ENCODE measurements at regions of chr3 and their contacts with region 1.

Region 1: DNA sequence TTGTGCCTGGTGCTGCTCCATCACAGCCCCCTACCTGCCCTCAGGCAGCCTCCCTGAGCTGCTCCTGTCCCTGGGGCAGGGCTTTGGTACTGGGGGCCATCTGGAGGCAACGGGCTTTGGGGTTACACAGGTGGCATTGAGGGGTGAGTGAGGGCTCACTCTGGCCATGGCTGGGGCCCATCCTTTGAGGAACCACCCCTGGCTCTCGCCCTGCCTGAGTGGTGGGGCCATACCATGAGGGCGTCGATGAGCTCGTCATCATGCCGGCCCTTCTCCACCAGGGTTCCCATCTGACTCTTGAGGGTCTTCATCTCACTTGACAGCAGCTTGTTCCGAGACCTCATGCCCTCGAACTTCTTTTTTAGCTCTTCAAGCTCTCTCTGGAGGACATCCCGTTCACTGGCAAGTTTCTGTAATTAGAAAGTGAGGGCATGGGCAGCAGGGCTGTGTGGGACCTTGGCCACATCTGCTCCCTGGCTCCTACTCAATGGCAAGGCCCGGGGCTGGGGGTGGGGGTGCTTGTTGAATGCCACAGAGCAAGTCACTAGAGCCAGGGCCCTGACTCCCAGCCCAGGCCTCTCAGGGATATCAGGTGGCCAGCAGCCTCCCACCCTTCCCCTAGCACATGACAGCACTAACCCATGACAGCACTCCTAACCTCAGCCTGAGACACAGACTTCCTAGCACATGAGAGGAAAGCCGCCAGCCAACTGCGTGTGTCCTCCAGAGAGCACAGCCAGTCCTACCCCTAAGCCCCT is 33.5 kb downstream of the CCDC13 start:
- DNase-seq: peak; percentile 89 to 97 (median 90)
- ATAC-seq: peak; percentile 96 to 97 (median 96)
- H3K4me3 ChIP-seq: no peak overlapping the region
- H3K27ac ChIP-seq: peak overlapping the region; percentile 77 to 99 (median 92)
- H3K4me1 ChIP-seq: peaks cover 0 to 36% (median 15%) of the 10 kb centered on the region in 12 donors
- H3K27me3 ChIP-seq: no peaks in the 10 kb centered on the region
- CTCF ChIP-seq: no peak
- POLR2A ChIP-seq: no peak

Region 2: DNA sequence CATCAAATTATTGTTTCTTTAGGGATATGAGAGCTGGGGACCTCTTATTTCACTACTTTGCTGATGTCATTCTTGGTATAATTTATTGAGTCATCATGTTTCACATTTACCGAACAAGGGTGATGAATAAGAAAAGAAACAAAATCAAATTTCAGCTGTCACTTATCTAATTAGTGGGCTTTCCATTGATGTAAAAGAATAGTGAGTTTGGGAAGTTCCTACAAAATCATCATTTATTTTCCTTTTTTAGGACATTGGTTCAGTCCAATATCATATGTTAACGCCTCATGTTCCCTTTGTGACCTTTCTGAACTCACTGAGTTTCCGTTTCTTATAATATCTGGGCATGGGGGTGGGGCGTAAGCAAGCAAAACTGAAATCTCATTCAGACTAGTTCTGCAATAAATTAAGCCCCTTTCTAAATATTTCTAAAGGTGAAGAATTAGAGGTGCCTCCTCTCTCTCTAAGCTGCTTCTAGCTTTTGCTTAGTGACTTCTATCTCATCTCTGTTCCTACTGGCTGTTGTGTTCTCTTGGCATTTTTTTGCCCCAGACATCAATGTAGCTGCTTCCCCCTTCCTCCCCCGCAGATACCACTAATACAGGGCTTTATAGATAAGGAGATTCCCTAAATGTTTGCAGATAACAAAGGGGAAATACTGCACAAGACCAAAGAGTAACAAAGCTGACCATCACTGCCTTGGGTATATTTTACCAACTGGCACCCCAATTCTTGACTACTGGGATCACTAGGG is 1778.3 kb before region 1 on chr3:
- intact Hi-C with region 1: no loop called
- DNase-seq: no peak
- ATAC-seq: no peak
- H3K4me3 ChIP-seq: no peak overlapping the region
- H3K27ac ChIP-seq: no peak overlapping the region
- H3K4me1 ChIP-seq: no peaks in the 10 kb centered on the region
- H3K27me3 ChIP-seq: no peaks in the 10 kb centered on the region
- CTCF ChIP-seq: no peak
- POLR2A ChIP-seq: no peak

Region 3: DNA sequence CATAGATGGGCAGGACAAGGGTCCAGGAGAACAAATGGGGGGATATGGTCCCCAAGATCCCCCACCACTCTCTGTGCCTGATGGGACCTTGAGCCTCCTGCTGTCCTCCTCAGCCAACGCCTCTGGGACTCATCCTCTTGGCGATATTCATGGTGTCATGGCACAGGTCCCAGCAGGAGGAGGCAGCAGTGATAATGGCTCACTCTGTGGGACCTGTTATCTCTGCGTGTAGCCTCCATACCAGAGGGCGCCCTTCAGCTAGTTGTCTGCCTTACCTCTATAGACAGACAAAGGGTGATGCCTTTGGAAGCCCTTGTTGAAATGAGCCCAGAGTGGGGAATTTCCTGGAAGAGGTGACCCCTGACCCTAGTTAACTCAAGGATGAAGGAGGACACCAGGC is 78.7 kb before region 1 on chr3:
- intact Hi-C with region 1: loop called in 3 of 10 experiments (anchors 5 kb)
- DNase-seq: peak in 3 of 5 donors; percentile 43 to 64 (median 52)
- ATAC-seq: peak in 3 of 4 donors; percentile 32 to 58 (median 36)
- H3K4me3 ChIP-seq: no peak overlapping the region
- H3K27ac ChIP-seq: peak overlapping the region in 9 of 12 donors; percentile 19 to 98 (median 61)
- H3K4me1 ChIP-seq: peaks cover 0 to 63% (median 24%) of the 10 kb centered on the region in 12 donors
- H3K27me3 ChIP-seq: no peaks in the 10 kb centered on the region
- CTCF ChIP-seq: peak in 3 of 12 donors; percentile 18 to 43 (median 32)
- POLR2A ChIP-seq: no peak

Region 4: GRCh38 chr3:42667523-42668412 is 71.8 kb before region 1 on chr3:
- intact Hi-C with region 1: loop called in 2 of 10 experiments (anchors 5 kb)
- DNase-seq: peak in 1 of 5 donors; percentile 37
- ATAC-seq: peak in 3 of 4 donors; percentile 1 to 14 (median 5)
- H3K4me3 ChIP-seq: no peak overlapping the region
- H3K27ac ChIP-seq: peak overlapping the region in 7 of 12 donors; percentile 31 to 86 (median 75)
- H3K4me1 ChIP-seq: peaks cover 0 to 40% (median 26%) of the 10 kb centered on the region in 12 donors
- H3K27me3 ChIP-seq: no peaks in the 10 kb centered on the region
- CTCF ChIP-seq: no peak
- POLR2A ChIP-seq: no peak

Region 5: DNA sequence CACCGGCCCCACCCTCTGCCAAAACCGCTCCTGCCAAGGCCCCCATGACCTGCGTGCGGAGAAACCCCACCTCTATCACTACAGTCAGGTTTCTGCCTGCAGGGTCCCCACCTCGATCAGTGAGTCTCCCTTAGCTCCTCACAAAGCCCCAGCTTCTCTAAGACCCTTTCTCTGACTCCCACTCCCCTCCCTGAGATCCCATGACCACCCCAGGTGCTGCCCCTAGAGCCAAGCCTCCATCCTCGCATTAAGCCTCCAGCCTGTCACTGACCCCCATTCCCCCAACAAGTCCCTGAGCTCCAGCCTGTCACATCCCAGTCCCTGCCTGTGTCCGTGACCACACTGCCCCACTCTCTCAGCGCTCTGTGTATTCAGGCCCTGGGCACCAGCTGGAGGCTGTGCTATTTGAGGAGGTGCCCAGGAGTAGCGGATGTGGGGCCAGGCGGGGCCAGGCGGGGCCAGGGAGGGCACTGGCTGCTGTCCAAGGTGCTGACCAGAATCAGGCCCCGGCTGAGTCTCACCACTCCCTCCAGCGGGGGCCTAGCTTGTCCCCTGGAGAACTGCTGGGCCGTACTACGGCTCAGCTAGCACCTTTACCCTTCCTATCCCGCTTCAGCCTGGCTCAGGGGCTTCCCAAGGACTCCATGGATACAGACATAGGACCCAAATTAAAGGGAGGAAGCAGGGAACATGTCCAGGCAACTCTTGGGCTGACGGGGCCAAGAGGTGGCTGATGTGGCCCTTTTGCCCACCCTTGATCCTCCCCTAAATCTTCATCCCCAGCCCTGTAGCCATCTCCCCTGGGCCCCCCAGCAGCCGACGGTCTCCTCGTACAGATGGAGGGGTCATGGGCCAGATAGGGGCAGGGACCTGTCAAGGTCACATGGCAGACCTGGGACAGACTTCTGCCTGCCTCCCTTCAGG is 38.2 kb before region 1 on chr3:
- intact Hi-C with region 1: loop called in 9 of 10 experiments (anchors 1 to 5 kb)
- DNase-seq: peak; percentile 85 to 90 (median 86)
- ATAC-seq: peak; percentile 75 to 81 (median 80)
- H3K4me3 ChIP-seq: peak overlapping the region; percentile 23 to 67 (median 54)
- H3K27ac ChIP-seq: peak overlapping the region; percentile 85 to 99 (median 96)
- H3K4me1 ChIP-seq: peaks cover 0 to 61% (median 6%) of the 10 kb centered on the region in 12 donors
- H3K27me3 ChIP-seq: no peaks in the 10 kb centered on the region
- CTCF ChIP-seq: peak in 2 of 12 donors; percentile 24 to 28
- POLR2A ChIP-seq: peak; percentile 1 to 79

Region 6: DNA sequence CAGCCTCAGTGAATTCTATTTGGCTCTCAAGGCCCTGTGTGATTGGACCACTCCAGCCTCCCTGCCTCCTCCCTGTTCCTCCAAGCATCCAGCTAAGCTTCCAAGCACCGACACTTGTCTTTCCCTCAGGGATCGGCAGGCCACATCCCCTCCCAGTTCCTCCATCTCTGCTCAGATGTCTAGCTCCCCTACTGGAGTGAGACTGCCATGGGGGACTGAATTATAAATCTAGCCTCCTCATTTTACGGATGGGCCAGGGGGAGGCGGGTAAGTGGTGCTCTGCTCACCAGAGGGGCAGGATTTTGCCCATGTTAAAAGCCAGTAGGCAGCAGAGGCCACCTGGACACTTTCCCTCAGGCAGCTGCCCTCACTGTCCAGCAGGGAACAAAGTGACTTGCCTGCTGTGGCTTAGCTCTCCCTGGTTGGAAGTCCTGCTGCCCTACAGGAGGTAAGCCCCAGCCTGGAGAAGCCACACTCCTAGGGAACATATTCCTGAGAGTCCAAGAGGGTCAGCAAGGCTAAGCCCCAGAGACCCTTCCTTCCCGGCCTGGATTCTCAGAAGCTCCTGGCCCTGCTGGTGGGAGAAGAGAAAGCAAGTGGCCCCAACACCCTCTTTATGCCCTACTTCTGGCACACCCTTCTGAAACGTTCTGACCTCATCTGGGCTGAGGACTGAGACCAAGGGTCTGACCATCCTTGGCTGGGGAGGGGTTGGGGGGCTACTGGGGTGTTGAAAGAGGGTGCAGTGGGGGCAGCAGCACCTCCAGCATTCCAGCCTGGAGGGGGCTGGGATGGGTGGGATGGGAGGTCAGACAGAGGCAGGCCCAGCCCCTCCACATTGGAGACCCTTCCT is 27.9 kb before region 1 on chr3:
- intact Hi-C with region 1: no loop called
- DNase-seq: peak in 1 of 5 donors; percentile 3
- ATAC-seq: peak in 1 of 4 donors; percentile 13
- H3K4me3 ChIP-seq: no peak overlapping the region
- H3K27ac ChIP-seq: no peak overlapping the region
- H3K4me1 ChIP-seq: no peaks in the 10 kb centered on the region
- H3K27me3 ChIP-seq: no peaks in the 10 kb centered on the region
- CTCF ChIP-seq: peak in 1 of 12 donors; percentile 3
- POLR2A ChIP-seq: no peak

Region 7: DNA sequence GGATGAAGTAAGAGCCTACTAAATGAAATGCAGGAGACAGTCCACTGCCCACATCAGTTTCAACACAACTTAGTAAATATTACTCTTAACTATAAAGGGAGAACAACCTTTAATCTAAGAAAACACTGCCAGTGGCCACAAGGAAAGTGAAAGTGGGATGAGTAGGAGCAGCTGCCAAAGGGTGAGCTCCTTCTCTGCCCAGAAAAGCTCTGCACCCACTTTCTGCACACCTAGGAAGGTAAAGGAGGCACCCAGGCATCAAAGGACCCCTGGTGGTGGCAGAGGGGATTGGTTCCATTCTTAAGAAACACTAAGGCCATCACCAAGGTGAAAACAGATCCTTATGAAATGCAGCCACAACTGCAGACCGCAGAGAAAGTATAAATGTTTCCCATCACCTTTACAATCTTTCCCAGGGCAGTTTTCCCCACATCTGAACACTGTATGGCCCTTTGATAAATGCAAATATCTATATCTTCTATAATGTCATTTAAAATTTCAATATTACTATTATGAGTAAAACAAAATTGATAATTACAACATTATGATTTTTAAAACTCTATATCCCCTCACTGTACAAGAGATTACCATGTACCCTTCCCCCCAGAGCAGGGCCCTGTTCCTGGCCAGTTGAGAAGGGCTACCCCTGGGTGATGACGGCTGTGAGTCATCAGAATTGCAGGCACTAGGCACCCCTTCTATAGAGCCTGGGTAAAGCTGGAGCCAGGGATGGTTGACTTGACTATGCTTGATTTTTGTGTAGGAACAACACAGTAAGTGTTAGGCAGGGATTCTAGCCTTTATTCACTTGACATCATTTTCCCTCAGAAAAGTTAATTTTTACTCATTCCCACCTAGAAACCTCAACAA is 638.7 kb after region 1 on chr3:
- intact Hi-C with region 1: no loop called
- DNase-seq: no peak
- ATAC-seq: peak in 1 of 4 donors; percentile 42
- H3K4me3 ChIP-seq: no peak overlapping the region
- H3K27ac ChIP-seq: peak overlapping the region in 4 of 12 donors; percentile 1 to 53 (median 46)
- H3K4me1 ChIP-seq: peaks cover 0 to 22% (median 10%) of the 10 kb centered on the region in 12 donors
- H3K27me3 ChIP-seq: no peaks in the 10 kb centered on the region
- CTCF ChIP-seq: peak; percentile 37 to 67 (median 54)
- POLR2A ChIP-seq: no peak

Measured in heart left ventricle (tissue), 16 donors.